Activated naive CD8-positive, alpha-beta T cell treated with anti-CD3 and anti-CD28 coated beads, Interleukin-2, amount 10 ng/mL, durations not matched to agents 7 days and 5 days (primary cell): ENCODE measurements at regions of chr3 and their contacts with region 1.

Region 1: GRCh38 chr3:153192327-153192726 is 30.3 kb downstream of the RAP2B start:
- DNase-seq: no peak
- ATAC-seq: no peak
- H3K4me3 Mint-ChIP-seq: no peak overlapping the region
- H3K27ac Mint-ChIP-seq: no peak overlapping the region
- H3K4me1 Mint-ChIP-seq: peaks cover 2% of the 10 kb centered on the region
- H3K27me3 Mint-ChIP-seq: no peaks in the 10 kb centered on the region

Region 2: DNA sequence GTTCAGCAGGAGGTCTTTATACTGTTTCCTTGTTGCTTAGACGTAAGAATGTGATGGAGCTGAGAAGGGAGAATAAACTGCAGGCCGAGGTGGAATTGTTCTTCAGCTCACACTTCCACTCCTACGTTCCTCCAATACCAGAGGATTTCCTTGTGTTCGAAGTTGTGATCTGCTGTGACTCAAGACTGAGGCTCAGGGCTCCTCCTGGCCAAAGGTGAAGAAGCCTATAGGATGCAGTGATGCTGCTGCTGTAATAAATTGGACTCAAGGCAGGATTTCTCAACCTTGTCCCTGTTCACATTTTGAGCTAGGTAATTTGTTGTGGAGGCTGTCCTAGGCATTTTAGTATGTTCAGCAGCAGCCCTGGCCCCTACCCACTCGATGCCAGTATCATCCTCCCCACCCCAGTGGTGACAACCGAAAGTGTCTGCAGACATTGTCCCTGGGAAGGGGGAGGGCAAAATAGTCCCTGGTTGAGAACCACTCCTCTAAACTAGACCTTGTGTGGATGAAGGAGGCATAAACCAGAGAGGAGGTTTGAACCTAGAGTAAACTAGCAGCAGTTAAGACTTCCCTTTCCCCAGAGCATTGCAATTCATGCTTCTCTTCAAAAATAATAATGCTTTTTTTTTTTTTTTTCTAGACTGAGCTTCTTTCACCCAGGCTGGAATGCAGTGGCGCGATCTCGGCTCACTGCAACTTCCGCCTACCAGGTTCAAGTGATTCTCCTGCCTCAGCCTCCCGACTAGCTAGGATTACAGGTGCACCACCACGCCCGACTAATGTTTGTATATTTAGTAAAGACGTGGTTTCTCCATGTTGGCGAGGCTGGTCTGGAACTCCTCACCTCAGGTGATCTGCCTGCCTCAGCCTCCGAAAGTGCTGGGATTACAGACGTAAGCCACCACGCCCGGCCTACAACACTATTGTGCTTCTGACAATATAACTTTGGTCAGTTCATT is 19.2 kb before region 1 on chr3:
- POLR2A ChIA-PET with region 1: no interaction called
- DNase-seq: no peak
- ATAC-seq: no peak
- H3K4me3 Mint-ChIP-seq: no peak overlapping the region
- H3K27ac Mint-ChIP-seq: no peak overlapping the region
- H3K4me1 Mint-ChIP-seq: no peaks in the 10 kb centered on the region
- H3K27me3 Mint-ChIP-seq: no peaks in the 10 kb centered on the region

Region 3: DNA sequence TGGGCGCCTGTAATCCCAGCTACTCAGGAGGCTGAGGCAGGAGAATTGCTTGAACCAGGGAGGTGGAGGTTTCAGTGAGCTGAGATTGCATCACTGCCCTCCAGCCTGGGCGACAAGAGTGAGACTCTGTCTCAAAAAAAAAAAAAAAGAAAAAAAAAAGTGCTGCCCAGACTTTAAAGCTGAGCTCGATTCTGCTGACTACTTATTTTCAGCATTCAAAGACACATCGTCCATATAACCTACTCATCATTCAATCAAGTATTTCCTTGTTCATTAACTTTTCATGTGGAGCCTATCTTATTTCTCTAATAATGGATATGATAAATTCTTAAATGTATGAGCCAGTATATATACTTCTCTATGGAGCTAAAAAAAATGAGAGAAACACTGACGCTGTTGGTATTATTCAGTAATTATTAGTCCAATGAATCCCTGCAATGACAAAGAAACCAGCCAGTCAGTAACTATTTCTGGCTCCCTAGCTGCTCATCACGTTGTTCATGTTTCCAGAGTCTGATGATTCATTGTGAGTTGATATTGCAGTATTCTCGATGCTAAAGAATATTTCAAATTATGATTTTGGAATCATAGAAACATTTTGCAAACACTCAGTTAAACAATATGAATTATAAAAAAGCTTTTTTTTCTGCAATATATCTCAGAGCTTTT is 81.6 kb after region 1 on chr3:
- POLR2A ChIA-PET with region 1: interaction called, 10 read pairs
- DNase-seq: no peak
- ATAC-seq: no peak
- H3K4me3 Mint-ChIP-seq: no peak overlapping the region
- H3K27ac Mint-ChIP-seq: no peak overlapping the region
- H3K4me1 Mint-ChIP-seq: peaks cover 6% of the 10 kb centered on the region
- H3K27me3 Mint-ChIP-seq: no peaks in the 10 kb centered on the region